ENCODE measurements at regions of chr14 and their contacts with region 1.

Region 1: DNA sequence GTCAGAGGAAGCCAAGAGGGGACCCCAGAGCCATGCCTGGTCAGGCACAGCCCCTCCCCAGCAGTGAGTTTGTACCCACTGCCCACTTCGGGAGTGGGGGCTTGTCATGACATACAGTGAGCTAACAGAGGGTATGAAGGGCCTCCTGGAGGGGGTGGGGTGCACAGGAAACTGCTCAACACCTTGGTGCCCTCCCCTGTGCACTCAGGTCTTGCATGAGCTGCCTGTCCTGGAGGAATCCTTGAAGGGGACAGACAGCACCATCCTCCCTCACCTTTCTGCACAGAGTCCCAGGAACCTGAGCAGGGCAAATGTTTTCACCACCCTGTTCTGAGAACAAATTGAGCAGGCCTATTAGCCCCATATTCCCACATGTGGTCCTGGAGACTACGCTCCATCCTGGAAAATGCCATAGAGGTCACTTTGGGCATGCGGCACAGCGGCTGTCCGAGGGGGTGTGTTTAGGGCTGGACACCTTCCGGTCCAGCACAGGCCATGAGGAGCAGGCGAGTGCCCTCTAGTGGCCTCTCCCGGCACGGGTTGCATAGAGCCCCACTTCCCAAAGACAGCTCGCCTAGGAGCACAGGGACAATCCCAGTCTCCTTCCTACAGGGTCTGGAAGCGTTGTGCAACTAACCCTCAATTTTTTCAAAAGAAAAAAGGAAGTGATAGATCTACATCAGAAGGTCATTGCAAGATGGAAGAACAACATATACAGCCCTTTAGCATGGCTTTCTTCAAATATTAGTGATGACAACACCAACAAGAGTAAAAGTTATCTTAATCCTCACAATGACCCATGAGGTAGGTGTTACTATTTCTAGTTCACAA is 31.9 kb upstream of the ZFP36L1 start:
- DNase-seq: peak; percentile 66
- H3K4me3 Mint-ChIP-seq: no peak overlapping the region
- H3K27ac Mint-ChIP-seq: no peak overlapping the region
- H3K4me1 Mint-ChIP-seq: peaks cover 25% of the 10 kb centered on the region
- H3K27me3 Mint-ChIP-seq: no peaks in the 10 kb centered on the region

Region 2: GRCh38 chr14:67934008-67934481 is 890.7 kb before region 1 on chr14:
- CTCF ChIA-PET with region 1: interaction called, 11 read pairs
- POLR2A ChIA-PET with region 1: no interaction called
- intact Hi-C with region 1: no loop called
- DNase-seq: no peak
- H3K4me3 Mint-ChIP-seq: no peak overlapping the region
- H3K27ac Mint-ChIP-seq: no peak overlapping the region
- H3K4me1 Mint-ChIP-seq: peaks cover 5% of the 10 kb centered on the region
- H3K27me3 Mint-ChIP-seq: no peaks in the 10 kb centered on the region

Region 3: GRCh38 chr14:67943947-67944346 is 880.8 kb before region 1 on chr14:
- CTCF ChIA-PET with region 1: interaction called, 13 read pairs
- POLR2A ChIA-PET with region 1: no interaction called
- intact Hi-C with region 1: no loop called
- DNase-seq: peak; percentile 14
- H3K4me3 Mint-ChIP-seq: no peak overlapping the region
- H3K27ac Mint-ChIP-seq: no peak overlapping the region
- H3K4me1 Mint-ChIP-seq: no peaks in the 10 kb centered on the region
- H3K27me3 Mint-ChIP-seq: no peaks in the 10 kb centered on the region